Left colon (tissue), 2 donors: ENCODE measurements at regions of chr5 and their contacts with region 1.

Region 1: DNA sequence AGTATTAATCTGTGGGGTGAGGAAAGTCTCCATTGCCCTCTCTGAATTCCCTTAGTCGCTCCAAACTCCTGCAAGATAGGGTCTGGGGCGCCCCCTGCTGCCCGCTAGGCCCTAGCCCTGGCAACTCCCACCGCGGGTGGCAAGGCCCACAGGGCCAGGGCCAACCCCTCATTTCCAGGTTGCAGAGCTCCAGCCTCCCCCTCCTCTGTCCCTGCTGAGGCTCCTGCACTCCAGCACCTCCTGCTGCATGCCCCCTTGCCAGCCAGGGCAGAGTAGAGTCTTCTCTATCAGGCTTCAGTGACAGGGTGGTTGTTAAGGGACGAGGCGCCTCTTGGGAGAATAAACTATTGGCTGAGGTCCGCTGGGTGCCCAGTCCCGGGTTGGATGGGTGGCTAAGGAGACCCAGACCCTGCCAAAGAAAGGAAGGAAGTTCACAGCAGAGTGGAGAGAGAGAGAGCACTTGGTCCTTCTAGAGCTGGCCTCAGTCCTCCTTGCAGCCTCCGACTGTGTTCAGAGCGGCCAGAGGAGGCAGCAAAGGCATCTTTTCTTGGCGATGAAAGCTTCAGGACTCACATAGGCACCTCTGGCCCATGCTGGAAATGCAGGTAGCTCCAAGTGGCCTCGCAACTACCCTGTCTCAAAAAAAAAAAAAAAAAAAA is 45.6 kb downstream of the SAR1B start:
- DNase-seq: peak; percentile 74 to 90
- ATAC-seq: peak; percentile 81

Region 2: DNA sequence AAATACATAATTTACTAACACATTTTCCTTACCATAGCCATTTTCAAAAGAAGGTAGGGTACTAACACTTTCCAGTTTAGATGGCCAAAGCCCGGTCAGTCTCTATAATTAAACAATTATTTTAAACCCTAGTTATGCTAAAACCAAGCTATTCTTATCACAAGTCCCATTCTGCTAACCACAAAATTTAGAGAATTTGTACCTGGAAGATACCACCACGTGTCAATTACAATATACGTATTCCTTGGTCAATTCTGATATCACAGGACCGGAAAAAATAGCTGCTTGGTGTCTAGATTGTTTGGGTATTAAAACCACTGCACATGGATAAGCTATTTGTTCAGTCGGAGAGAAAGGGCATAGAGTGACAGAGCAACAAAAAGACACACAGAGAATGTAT is 391.3 kb before region 1 on chr5:
- intact Hi-C with region 1: loop called in 1 of 2 experiments (anchors 10 kb)
- DNase-seq: no peak
- ATAC-seq: no peak

Region 3: GRCh38 chr5:134304311-134304710 is 282.7 kb before region 1 on chr5:
- intact Hi-C with region 1: loop called (anchors 5 to 10 kb)
- DNase-seq: no peak
- ATAC-seq: no peak

Region 4: DNA sequence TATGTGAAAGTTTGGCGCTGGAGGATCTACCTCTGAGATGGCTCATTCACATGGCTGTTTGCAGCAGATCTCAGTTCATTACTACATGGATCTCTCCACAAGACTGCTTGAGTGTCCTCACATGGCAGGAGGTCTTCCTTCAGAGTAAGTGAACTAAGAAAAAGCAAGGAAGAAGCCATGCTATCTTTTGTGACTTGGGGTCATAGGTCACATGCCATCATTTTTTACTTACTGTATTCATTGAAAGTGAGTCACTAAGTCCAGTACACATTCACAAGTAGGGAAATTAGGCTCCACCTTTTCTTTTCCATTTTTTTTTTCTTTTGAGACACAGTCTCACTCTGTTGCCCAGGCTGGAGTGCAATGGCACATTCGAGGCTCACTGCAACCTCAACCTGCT is 166.7 kb before region 1 on chr5:
- intact Hi-C with region 1: no loop called
- DNase-seq: no peak
- ATAC-seq: peak; percentile 66